MCF 10A (cell line): ENCODE measurements at regions of chr4 and their contacts with region 1.

Region 1: DNA sequence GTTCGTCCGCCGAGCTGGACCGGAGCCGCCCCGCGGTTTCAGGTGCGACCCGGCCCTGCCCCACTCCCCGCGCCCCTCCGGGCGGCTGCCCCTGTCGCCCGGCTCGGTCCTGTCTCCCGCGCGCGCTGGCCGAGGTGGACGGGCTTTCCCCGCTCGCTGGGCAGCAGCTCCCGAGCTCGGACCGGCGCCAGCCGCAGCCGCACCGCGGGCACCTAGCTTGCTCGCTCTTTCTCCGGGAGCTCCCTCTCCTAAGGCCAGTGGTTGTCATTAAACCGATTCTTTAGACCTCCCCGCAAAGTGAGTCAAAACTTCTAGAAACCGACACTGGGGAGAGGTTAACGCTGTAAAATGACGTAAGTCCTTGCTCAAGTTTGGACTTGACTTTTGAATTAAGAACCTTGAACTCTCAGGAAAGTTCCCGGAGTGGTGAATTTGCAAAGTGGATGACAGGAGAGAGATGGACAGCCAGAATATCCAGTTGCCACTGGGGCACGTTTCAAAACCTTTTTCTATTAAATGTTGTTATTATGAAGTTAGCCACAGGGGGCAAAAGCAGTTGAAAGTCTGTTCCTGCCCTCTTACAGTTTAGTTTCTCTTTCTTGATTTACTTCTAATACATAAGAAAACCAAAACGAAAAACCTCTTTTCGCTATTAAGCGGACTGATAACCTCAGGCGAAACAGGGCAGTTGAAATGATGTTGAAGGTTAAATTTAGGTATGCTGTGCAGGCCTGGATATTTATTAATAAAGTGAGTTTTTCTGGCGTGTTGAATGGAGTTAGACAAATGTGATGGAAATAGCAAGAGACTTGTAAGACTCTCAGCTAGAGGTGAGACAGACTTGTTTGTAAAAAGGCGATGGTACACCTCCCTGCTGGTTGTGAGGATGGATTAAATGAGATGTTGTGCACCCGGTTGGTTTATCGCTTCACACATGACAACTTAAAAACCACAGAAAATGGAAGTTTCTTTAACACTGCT is 847 bp downstream of the PI4K2B start:
- DNase-seq: peak; percentile 92
- H3K4me3 Mint-ChIP-seq: peak overlapping the region; percentile 86
- H3K27ac Mint-ChIP-seq: peak overlapping the region; percentile 90
- H3K4me1 Mint-ChIP-seq: peaks cover 10% of the 10 kb centered on the region
- H3K27me3 Mint-ChIP-seq: no peaks in the 10 kb centered on the region
- CTCF ChIP-seq: peak; percentile 44

Region 2: GRCh38 chr4:25065475-25065874 is 169.2 kb before region 1 on chr4:
- CTCF ChIA-PET with region 1: no interaction called
- POLR2A ChIA-PET with region 1: no interaction called
- intact Hi-C with region 1: no loop called
- DNase-seq: no peak
- H3K4me3 Mint-ChIP-seq: no peak overlapping the region
- H3K27ac Mint-ChIP-seq: no peak overlapping the region
- H3K4me1 Mint-ChIP-seq: no peaks in the 10 kb centered on the region
- H3K27me3 Mint-ChIP-seq: no peaks in the 10 kb centered on the region
- CTCF ChIP-seq: no peak

Region 3: GRCh38 chr4:25159884-25160713 is 74.6 kb before region 1 on chr4 and contains the start of gene SEPSECS:
- CTCF ChIA-PET with region 1: interaction called, 8 read pairs
- POLR2A ChIA-PET with region 1: interaction called, 106 read pairs
- intact Hi-C with region 1: loop called (anchors 1 kb)
- DNase-seq: peak; percentile 98
- H3K4me3 Mint-ChIP-seq: peak within 1 kb of the TSS; percentile 93
- H3K27ac Mint-ChIP-seq: peak within 1 kb of the TSS; percentile 87
- H3K4me1 Mint-ChIP-seq: peaks cover 17% of the 10 kb centered on the region
- H3K27me3 Mint-ChIP-seq: no peaks in the 10 kb centered on the region
- CTCF ChIP-seq: no peak
- total RNA-seq, gene SEPSECS: 9.4 and 9.7 TPM in 2 replicates

Region 4: DNA sequence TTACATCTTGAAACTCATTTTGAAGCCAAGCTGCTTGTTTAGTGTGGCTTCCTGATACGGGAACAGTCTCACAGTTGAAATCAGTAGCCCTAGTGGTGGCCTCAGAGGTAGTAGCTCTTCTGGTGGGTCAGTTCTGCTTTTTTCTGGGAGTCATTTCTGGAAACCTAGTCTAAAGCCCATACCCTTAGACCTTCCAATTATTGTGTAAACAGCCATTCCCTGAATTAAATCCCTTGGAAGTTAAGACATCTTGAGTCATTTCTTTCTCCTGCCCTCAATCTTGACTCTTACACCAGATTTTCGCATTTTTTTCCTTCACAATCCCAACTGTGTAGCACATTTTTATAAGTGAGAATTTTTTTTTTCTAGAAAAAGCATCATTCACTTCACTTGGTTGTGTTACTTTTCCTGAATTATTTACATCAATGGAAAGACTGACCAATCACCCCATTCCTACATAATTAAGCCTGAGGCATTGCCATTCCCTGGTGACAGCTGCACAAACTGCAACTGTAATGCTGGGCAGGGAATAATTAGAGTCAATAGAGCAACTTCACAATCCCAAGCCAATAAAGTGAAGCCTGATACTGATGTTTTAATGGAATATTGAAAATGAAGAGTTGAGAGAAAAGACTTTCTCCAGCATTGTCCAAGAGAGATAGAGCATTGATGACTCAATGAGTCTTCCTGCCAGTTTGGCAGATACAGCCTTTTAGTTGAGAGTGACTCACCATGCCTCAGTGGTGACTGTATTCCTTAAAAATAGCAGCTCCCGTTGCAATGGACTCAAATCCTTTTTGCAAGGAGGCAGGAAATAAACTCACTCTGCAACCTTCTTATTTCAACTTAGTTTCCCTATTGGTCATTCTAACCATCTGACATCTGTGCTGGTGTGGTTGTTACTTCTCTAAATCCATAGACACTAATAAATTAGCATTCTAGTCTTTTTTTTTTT is 61.4 kb before region 1 on chr4:
- CTCF ChIA-PET with region 1: interaction called, 4 read pairs
- POLR2A ChIA-PET with region 1: interaction called, 13 read pairs
- intact Hi-C with region 1: loop called (anchors 2 kb)
- DNase-seq: peak; percentile 93
- H3K4me3 Mint-ChIP-seq: peak overlapping the region; percentile 12
- H3K27ac Mint-ChIP-seq: peak overlapping the region; percentile 44
- H3K4me1 Mint-ChIP-seq: peaks cover 25% of the 10 kb centered on the region
- H3K27me3 Mint-ChIP-seq: no peaks in the 10 kb centered on the region
- CTCF ChIP-seq: no peak

Region 5: DNA sequence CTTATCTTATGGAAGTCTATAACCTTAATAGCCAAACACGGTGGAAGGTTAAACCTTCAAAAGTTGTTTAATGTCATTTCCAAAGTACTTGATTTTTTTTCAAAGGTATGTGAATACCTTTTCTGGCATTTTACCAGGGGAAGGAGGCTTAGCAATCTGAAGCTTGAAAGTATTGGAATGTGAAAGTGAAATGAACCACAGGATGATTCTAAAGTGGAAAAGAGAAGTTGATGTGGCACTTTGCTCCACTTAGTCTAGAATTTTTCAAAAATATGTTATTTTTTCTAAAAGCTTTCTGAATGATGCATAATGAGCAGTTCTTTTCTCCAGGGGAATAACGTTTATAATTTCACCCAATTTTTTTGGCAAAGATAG is 18.4 kb after region 1 on chr4:
- CTCF ChIA-PET with region 1: interaction called, 12 read pairs
- POLR2A ChIA-PET with region 1: interaction called, 8 read pairs
- intact Hi-C with region 1: no loop called
- DNase-seq: peak; percentile 24
- H3K4me3 Mint-ChIP-seq: no peak overlapping the region
- H3K27ac Mint-ChIP-seq: no peak overlapping the region
- H3K4me1 Mint-ChIP-seq: peaks cover 16% of the 10 kb centered on the region
- H3K27me3 Mint-ChIP-seq: no peaks in the 10 kb centered on the region
- CTCF ChIP-seq: no peak

Region 6: DNA sequence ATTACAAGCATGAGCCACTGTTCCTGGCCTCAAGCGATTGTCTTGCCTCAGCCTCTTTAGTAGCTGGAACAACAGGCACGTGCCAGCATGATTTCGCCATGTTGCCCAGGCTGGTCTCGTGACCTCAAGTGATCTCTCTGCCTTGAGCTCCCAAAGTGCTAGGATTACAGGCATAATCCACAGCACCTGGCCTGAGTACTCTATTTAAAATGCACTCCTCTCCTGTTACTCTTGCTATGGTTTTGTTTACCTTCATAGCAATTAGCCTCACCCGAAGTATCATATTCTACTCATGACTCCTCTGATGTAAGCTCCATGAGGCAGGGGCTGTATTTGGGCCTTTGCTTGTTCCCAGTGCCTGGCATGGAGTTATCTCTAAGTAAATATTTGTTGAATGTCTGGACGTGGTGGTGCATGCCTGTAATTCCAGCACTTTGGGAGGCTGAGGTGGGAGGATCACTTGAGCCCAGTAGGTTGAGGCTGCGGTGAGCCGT is 328.4 kb after region 1 on chr4:
- CTCF ChIA-PET with region 1: no interaction called
- POLR2A ChIA-PET with region 1: no interaction called
- intact Hi-C with region 1: no loop called
- DNase-seq: peak; percentile 52
- H3K4me3 Mint-ChIP-seq: no peak overlapping the region
- H3K27ac Mint-ChIP-seq: peak overlapping the region; percentile 44
- H3K4me1 Mint-ChIP-seq: no peaks in the 10 kb centered on the region
- H3K27me3 Mint-ChIP-seq: no peaks in the 10 kb centered on the region
- CTCF ChIP-seq: no peak

Region 7: DNA sequence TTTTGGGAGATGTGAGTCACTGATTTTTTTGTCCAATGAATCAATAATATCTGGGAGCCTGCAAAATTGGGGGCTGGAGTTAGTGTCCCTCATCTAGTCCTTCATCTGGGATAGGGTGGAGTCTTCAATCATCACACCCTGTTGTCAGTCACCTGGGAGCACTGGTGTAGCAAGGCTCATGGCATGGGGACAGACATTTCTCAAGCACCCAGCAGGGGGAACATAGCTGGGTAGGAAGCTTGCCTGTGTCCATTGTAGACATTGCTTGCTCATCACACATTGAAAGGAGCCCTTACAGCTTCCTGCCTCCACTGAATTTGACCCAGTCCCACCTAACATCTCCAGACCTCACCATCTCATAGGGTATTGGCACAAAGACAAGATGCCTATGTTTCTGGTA is 566.9 kb after region 1 on chr4:
- CTCF ChIA-PET with region 1: no interaction called
- POLR2A ChIA-PET with region 1: no interaction called
- intact Hi-C with region 1: no loop called
- DNase-seq: no peak
- H3K4me3 Mint-ChIP-seq: no peak overlapping the region
- H3K27ac Mint-ChIP-seq: no peak overlapping the region
- H3K4me1 Mint-ChIP-seq: no peaks in the 10 kb centered on the region
- H3K27me3 Mint-ChIP-seq: no peaks in the 10 kb centered on the region
- CTCF ChIP-seq: no peak